Activated CD4-positive, alpha-beta memory T cell treated with anti-CD3 and anti-CD28 coated beads for 36 hours (primary cell): ENCODE measurements at regions of chr14 and their contacts with region 1.

Region 1: GRCh38 chr14:68283378-68284123 is 464.0 kb downstream of the RAD51B start:
- DNase-seq: peak; percentile 68
- H3K4me3 Mint-ChIP-seq: no peak overlapping the region
- H3K27ac Mint-ChIP-seq: peak overlapping the region; percentile 34
- H3K4me1 Mint-ChIP-seq: peaks cover 69% of the 10 kb centered on the region
- H3K27me3 Mint-ChIP-seq: no peaks in the 10 kb centered on the region

Region 2: DNA sequence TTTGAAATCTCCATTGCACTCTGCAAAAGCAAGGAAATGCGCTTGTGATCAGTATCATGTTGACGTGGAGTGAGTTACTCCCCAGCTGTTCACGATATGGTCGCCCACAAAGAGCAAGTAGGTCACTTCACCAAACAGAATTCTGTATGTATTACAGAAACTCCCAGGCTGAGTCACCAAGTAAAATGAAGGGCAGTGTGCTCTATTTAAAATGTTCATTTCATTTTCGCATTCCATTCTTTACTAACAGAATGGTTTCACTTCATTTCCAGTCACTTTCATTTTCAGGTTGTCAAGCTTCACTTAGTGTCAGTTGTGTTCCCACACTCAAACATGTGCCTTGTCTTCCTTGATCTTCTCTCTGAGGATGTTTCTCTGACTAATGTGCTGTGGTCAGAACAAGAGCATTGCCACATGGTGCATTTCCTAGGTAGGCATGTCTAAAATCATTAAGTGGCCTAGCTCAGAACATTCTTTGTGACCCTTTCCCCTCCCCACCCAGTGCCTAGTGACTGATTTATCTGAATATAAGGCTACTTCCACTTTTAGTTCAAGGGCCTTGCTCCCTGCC is 72.7 kb before region 1 on chr14:
- CTCF ChIA-PET with region 1: no interaction called
- POLR2A ChIA-PET with region 1: no interaction called
- intact Hi-C with region 1: loop called (anchors 5 kb)
- DNase-seq: peak; percentile 66
- H3K4me3 Mint-ChIP-seq: peak overlapping the region; percentile 56
- H3K27ac Mint-ChIP-seq: peak overlapping the region; percentile 64
- H3K4me1 Mint-ChIP-seq: peaks cover 47% of the 10 kb centered on the region
- H3K27me3 Mint-ChIP-seq: no peaks in the 10 kb centered on the region

Region 3: DNA sequence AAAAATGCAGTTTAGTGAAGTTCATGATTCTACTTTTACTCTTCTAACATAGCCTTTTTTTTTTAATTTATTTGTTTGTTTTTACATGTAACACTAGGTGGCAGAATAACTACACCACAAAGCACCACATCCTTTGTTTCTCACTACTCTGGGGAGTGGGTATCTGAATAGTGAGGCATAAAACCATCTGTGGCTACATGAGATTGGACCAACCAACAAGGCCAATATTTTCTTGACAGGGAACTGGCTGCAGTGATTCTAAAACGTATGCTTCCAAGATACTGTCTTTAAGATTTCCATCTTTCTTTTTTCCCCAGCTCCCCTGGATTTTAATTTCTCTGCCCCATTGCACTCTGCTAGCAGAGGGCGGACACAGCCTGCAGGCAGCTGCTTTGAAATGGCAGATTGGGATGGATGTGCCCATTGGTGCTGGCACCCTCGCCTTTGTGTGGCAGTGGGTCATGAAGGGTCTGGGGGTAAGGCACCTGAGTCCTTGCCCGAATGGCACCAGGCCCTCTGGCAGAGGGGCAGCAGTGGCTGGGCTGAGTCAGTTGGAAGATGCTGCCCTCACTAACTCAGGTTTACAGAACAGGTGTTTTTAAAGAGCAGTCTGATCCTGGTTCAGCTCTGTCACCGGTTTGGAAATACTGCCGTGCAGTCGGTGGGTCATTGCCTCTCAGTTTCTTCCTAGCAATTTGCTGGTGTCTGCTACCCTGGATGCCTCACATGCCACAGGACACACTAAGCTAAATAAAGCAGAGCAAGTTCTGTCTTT is 34.9 kb before region 1 on chr14:
- CTCF ChIA-PET with region 1: interaction called, 11 read pairs
- POLR2A ChIA-PET with region 1: no interaction called
- intact Hi-C with region 1: no loop called
- DNase-seq: no peak
- H3K4me3 Mint-ChIP-seq: no peak overlapping the region
- H3K27ac Mint-ChIP-seq: no peak overlapping the region
- H3K4me1 Mint-ChIP-seq: peaks cover 36% of the 10 kb centered on the region
- H3K27me3 Mint-ChIP-seq: no peaks in the 10 kb centered on the region

Region 4: DNA sequence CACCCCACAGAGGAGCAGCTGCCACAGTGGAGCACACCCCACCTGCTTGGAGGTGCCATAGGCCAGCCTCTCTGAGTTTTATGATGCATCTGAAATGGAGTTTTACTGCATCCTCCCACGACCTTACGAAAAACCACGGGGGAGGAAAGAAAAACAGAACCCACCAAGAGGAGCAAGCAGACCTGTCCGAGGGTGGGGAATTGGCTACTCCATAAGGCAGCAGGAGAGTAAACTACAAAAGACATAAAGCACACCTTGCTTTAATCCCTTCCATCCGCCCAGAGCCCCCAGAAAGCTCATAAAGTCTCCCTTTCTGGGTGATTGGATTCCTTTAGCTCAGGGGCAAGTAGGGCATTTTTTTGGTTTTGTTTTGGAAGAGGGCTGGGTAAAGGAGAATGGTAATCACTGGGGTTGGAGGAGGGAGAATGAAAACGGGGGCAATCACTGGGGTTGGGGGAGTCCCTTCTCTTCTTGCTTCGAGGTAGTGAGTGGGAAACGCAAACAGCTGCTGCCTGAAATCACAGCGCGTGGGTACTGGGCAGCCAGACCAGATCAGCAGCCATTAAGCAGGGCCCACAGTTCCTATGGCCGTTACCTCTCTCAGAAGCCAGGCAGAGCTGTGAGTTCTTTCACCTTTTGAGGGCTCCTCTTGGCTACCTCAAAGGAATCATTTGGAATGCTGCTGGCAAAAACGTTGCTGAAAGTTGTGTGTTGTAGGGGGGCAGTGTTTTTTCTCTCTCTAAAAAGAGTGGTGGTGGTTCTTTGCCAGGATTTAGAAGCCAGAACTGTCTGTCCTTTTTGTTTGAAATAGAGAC is 75.7 kb after region 1 on chr14:
- CTCF ChIA-PET with region 1: no interaction called
- POLR2A ChIA-PET with region 1: no interaction called
- intact Hi-C with region 1: no loop called
- DNase-seq: no peak
- H3K4me3 Mint-ChIP-seq: no peak overlapping the region
- H3K27ac Mint-ChIP-seq: no peak overlapping the region
- H3K4me1 Mint-ChIP-seq: peaks cover 21% of the 10 kb centered on the region
- H3K27me3 Mint-ChIP-seq: no peaks in the 10 kb centered on the region

Region 5: GRCh38 chr14:68369281-68370056 is 85.9 kb after region 1 on chr14:
- CTCF ChIA-PET with region 1: no interaction called
- POLR2A ChIA-PET with region 1: no interaction called
- intact Hi-C with region 1: loop called (anchors 2 kb)
- DNase-seq: no peak
- H3K4me3 Mint-ChIP-seq: peak overlapping the region; percentile 33
- H3K27ac Mint-ChIP-seq: peak overlapping the region; percentile 9
- H3K4me1 Mint-ChIP-seq: peaks cover 32% of the 10 kb centered on the region
- H3K27me3 Mint-ChIP-seq: no peaks in the 10 kb centered on the region

Region 6: GRCh38 chr14:68487805-68488590 is 204.4 kb after region 1 on chr14:
- CTCF ChIA-PET with region 1: no interaction called
- POLR2A ChIA-PET with region 1: no interaction called
- intact Hi-C with region 1: loop called (anchors 10 kb)
- DNase-seq: peak; percentile 27
- H3K4me3 Mint-ChIP-seq: no peak overlapping the region
- H3K27ac Mint-ChIP-seq: peak overlapping the region; percentile 29
- H3K4me1 Mint-ChIP-seq: peaks cover 39% of the 10 kb centered on the region
- H3K27me3 Mint-ChIP-seq: no peaks in the 10 kb centered on the region